ENCODE measurements at regions of chr10 and their contacts with region 1.

Region 1: GRCh38 chr10:62082729-62083411 is 181.4 kb downstream of the ARID5B start:
- DNase-seq: peak; percentile 44
- H3K4me3 Mint-ChIP-seq: peak overlapping the region; percentile 61
- H3K27ac Mint-ChIP-seq: peak overlapping the region; percentile 87
- H3K4me1 Mint-ChIP-seq: peaks cover 62% of the 10 kb centered on the region
- H3K27me3 Mint-ChIP-seq: no peaks in the 10 kb centered on the region

Region 2: GRCh38 chr10:62121187-62121530 is 38.3 kb after region 1 on chr10:
- intact Hi-C with region 1: loop called (anchors 5 kb)
- DNase-seq: no peak
- H3K4me3 Mint-ChIP-seq: no peak overlapping the region
- H3K27ac Mint-ChIP-seq: peak overlapping the region; percentile 66
- H3K4me1 Mint-ChIP-seq: peaks cover 27% of the 10 kb centered on the region
- H3K27me3 Mint-ChIP-seq: no peaks in the 10 kb centered on the region

Measured in activated T-helper 2 cell treated with anti-CD3 and anti-CD28 coated beads, Interferon-gamma antibody, Interleukin-2, Interleukin-4, amounts not matched to agents 10 μg/mL and 5 μg/mL and 100 μg/mL, durations not matched to agents 14 hours and 24 hours and 36 hours (primary cell).